Activated T-helper 1 cell treated with anti-CD3 and anti-CD28 coated beads, Interleukin-12 subunit alpha, Interleukin-12 subunit beta, Interleukin-2, Interleukin-4 antibody, amounts not matched to agents 30 ng/mL and 10 ng/mL and 1 ng/mL, durations not matched to agents 14 hours and 24 hours and 36 hours (primary cell): ENCODE measurements at regions of chr3 and their contacts with region 1.

Region 1: DNA sequence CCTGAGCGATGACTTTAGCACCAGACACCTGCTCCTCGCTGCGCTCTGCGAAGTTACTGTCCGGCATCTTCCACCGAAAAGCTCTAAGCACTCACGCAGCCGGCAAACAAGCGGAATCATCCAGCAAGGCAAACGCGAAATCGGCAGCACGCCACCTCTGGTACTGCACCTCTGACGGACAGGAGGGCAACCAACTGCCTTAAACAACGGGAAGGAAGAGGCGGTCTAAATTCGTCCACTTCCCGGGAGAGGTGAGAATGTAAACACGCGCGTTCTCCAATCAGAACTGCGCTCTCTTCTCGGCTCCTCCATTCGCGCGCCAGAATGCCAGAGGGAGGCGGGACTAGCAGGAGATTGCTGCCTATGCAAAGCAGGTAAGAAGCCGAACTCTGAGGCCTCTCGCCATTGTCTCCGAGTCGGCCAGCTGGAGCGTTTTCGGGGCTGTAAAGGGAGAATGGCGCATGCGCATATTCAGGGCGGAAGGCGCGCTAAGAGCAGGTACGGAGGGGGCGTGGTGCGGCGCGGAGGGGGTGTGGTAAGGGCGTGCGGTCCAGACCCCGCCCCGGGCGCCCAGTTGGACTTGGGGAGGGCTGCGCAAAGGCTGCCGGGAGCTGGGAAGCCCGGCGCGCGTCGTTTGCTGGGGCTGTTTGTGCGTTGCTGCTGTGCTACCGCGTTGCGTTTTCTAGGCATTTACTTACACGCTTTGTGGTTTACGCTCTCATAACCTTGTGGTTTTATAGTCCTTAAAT is at the starts of genes BTD and HACL1:
- DNase-seq: peak; percentile 97
- H3K4me3 Mint-ChIP-seq: peak within 1 kb of the TSS; percentile 99
- H3K27ac Mint-ChIP-seq: peak within 1 kb of the TSS; percentile 99
- H3K4me1 Mint-ChIP-seq: peaks cover 51% of the 10 kb centered on the region
- H3K27me3 Mint-ChIP-seq: no peaks in the 10 kb centered on the region
- total RNA-seq, gene BTD: 2.6 and 3.5 TPM in 2 replicates
- total RNA-seq, gene HACL1: 21.4 and 24.8 TPM in 2 replicates

Region 2: GRCh38 chr3:14947886-14948555 is 653.5 kb before region 1 on chr3:
- intact Hi-C with region 1: loop called (anchors 1 kb)
- DNase-seq: peak; percentile 95
- H3K4me3 Mint-ChIP-seq: peak overlapping the region; percentile 97
- H3K27ac Mint-ChIP-seq: peak overlapping the region; percentile 100
- H3K4me1 Mint-ChIP-seq: peaks cover 36% of the 10 kb centered on the region
- H3K27me3 Mint-ChIP-seq: no peaks in the 10 kb centered on the region

Region 3: GRCh38 chr3:15309662-15310335 is 291.8 kb before region 1 on chr3:
- intact Hi-C with region 1: loop called (anchors 2 kb)
- DNase-seq: no peak
- H3K4me3 Mint-ChIP-seq: peak overlapping the region; percentile 66
- H3K27ac Mint-ChIP-seq: peak overlapping the region; percentile 94
- H3K4me1 Mint-ChIP-seq: peaks cover 66% of the 10 kb centered on the region
- H3K27me3 Mint-ChIP-seq: no peaks in the 10 kb centered on the region

Region 4: DNA sequence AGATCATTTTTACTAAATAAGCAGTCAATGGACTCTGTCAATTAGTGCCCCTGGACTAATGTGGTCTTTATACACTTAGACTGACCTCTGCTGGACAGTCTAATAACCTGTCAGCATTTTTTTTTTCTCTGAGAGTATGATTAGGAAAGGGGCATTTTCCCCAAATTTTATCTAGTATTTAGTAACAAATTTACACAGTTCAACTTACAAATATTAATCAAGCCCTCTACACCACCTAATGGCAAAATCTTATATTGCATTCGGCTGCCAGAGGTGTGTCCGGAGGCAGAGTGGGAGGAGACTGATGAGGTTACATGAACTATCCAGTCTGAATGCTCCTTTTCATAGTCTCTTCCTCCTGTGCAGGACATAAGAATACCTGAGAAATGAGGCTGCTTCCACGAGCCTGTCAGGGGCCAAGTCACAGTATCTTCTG is 44.0 kb before region 1 on chr3:
- intact Hi-C with region 1: loop called (anchors 2 kb)
- DNase-seq: peak; percentile 60
- H3K4me3 Mint-ChIP-seq: no peak overlapping the region
- H3K27ac Mint-ChIP-seq: no peak overlapping the region
- H3K4me1 Mint-ChIP-seq: peaks cover 32% of the 10 kb centered on the region
- H3K27me3 Mint-ChIP-seq: no peaks in the 10 kb centered on the region

Region 5: DNA sequence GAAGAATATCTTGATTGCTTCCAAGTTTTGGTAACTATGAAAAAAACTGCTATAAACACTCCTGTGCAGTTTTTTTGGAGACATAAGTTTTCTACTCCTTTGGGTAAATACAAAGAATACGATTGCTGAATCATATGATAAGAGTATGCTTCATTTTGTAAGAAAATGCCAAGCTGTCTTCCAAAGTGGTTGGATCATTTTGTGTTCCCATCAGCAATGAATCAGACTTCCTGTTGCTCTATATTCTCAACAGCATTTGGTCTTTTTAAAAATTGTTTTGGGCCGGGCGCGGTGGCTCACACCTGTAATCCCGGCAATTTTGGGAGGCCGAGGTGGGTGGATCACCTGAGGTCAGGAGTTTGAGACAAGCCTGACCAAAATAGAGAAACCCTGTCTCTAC is 14.5 kb after region 1 on chr3:
- intact Hi-C with region 1: no loop called
- DNase-seq: no peak
- H3K4me3 Mint-ChIP-seq: no peak overlapping the region
- H3K27ac Mint-ChIP-seq: no peak overlapping the region
- H3K4me1 Mint-ChIP-seq: no peaks in the 10 kb centered on the region
- H3K27me3 Mint-ChIP-seq: peaks cover 10% of the 10 kb centered on the region

Region 6: GRCh38 chr3:15797642-15798303 is 196.2 kb after region 1 on chr3 and contains the start of gene ANKRD28:
- intact Hi-C with region 1: loop called (anchors 1 kb)
- DNase-seq: peak; percentile 27
- H3K4me3 Mint-ChIP-seq: peak within 1 kb of the TSS; percentile 88
- H3K27ac Mint-ChIP-seq: peak within 1 kb of the TSS; percentile 99
- H3K4me1 Mint-ChIP-seq: peaks cover 92% of the 10 kb centered on the region
- H3K27me3 Mint-ChIP-seq: no peaks in the 10 kb centered on the region
- total RNA-seq, gene ANKRD28: 39.6 and 42.9 TPM in 2 replicates

Region 7: GRCh38 chr3:16511681-16512434 is 910.3 kb after region 1 on chr3:
- intact Hi-C with region 1: loop called (anchors 10 kb)
- DNase-seq: peak; percentile 79
- H3K4me3 Mint-ChIP-seq: peak overlapping the region; percentile 97
- H3K27ac Mint-ChIP-seq: peak overlapping the region; percentile 89
- H3K4me1 Mint-ChIP-seq: peaks cover 83% of the 10 kb centered on the region
- H3K27me3 Mint-ChIP-seq: no peaks in the 10 kb centered on the region